ENCODE measurements at regions of chr7 and their contacts with region 1.

Region 1: GRCh38 chr7:78020136-78020873 is 221.7 kb downstream of the PHTF2 start:
- DNase-seq: peak; percentile 79 to 80
- ATAC-seq: peak; percentile 65 to 85
- H3K4me3 ChIP-seq: peak overlapping the region; percentile 59
- H3K27ac ChIP-seq: peak overlapping the region; percentile 76 to 94
- H3K4me1 ChIP-seq: peaks cover 6% of the 10 kb centered on the region; the same call in 2 of the 3 replicates
- CTCF ChIP-seq: peak; percentile 90
- EP300 ChIP-seq: no peak
- POLR2A ChIP-seq: no peak
- RAD21 ChIP-seq: peak; percentile 80 to 86

Region 2: GRCh38 chr7:78006063-78006755 is 14.1 kb before region 1 on chr7:
- CTCF ChIA-PET with region 1: interaction called, 11 read pairs
- POLR2A ChIA-PET with region 1: no interaction called
- DNase-seq: no peak
- ATAC-seq: peak; percentile 42 to 46; a peak in 3 of 6 replicates
- H3K4me3 ChIP-seq: no peak overlapping the region
- H3K27ac ChIP-seq: no peak overlapping the region
- H3K4me1 ChIP-seq: no peaks in the 10 kb centered on the region
- CTCF ChIP-seq: no peak
- EP300 ChIP-seq: no peak
- POLR2A ChIP-seq: no peak
- RAD21 ChIP-seq: no peak

Region 3: GRCh38 chr7:78033410-78033809 is 13.1 kb after region 1 on chr7:
- CTCF ChIA-PET with region 1: interaction called, 39 read pairs
- POLR2A ChIA-PET with region 1: no interaction called
- DNase-seq: no peak
- ATAC-seq: no peak
- H3K4me3 ChIP-seq: no peak overlapping the region
- H3K27ac ChIP-seq: no peak overlapping the region
- H3K4me1 ChIP-seq: no peaks in the 10 kb centered on the region
- CTCF ChIP-seq: no peak
- EP300 ChIP-seq: no peak
- POLR2A ChIP-seq: no peak
- RAD21 ChIP-seq: no peak

Region 4: GRCh38 chr7:78039790-78040776 is 19.8 kb after region 1 on chr7:
- CTCF ChIA-PET with region 1: interaction called, 39 read pairs
- POLR2A ChIA-PET with region 1: no interaction called
- DNase-seq: peak; percentile 36 to 38
- ATAC-seq: peak; percentile 79 to 98
- H3K4me3 ChIP-seq: no peak overlapping the region
- H3K27ac ChIP-seq: no peak overlapping the region
- H3K4me1 ChIP-seq: no peaks in the 10 kb centered on the region
- CTCF ChIP-seq: peak; percentile 69
- EP300 ChIP-seq: no peak
- POLR2A ChIP-seq: no peak
- RAD21 ChIP-seq: peak; percentile 55

Region 5: DNA sequence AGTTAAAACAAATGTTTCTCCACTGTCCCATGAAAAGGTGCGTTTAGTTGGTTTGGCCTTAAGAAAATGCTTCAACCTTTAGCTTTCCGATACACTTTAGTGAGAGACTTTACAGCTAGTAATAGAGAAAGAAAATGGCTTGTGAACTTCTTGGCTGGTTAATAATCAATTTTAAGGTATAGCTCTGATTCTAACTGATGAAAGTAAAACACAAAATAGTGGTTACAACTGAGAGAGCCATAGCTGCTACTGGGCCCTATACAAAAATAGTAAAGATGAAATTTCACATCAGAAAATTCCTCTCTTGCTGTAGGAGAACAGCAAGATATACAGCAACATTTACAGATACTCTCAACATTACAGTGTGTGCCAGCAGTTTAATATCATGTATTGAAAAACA is 149.7 kb after region 1 on chr7:
- CTCF ChIA-PET with region 1: no interaction called
- POLR2A ChIA-PET with region 1: no interaction called
- DNase-seq: no peak
- ATAC-seq: no peak
- H3K4me3 ChIP-seq: no peak overlapping the region
- H3K27ac ChIP-seq: no peak overlapping the region
- H3K4me1 ChIP-seq: no peaks in the 10 kb centered on the region
- CTCF ChIP-seq: no peak
- EP300 ChIP-seq: no peak
- POLR2A ChIP-seq: no peak
- RAD21 ChIP-seq: no peak

Region 6: DNA sequence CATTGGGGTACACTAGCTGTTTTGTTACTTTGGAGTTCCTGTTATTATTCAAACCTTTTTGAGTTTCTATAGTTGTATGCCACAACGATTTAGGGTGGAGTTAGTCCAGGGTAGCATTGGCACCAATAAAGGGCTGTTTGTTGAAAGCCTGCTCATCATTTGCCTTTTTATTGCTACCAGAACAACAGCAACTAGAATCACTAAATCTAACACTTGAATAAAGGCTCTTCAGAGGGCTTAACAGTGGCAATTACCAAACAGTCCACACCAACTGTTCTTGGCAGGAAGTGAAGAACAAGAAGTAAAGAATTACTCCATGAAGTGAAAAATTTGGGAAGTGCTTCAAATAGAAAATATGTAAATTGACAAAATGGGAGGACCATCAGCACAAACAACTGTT is 399.7 kb after region 1 on chr7:
- CTCF ChIA-PET with region 1: no interaction called
- POLR2A ChIA-PET with region 1: no interaction called
- DNase-seq: no peak
- ATAC-seq: no peak
- H3K4me3 ChIP-seq: no peak overlapping the region
- H3K27ac ChIP-seq: no peak overlapping the region
- H3K4me1 ChIP-seq: no peaks in the 10 kb centered on the region
- CTCF ChIP-seq: no peak
- EP300 ChIP-seq: no peak
- POLR2A ChIP-seq: no peak
- RAD21 ChIP-seq: no peak

Measured in A549 (cell line).